ENCODE measurements at regions of chr1 and their contacts with region 1.

Region 1: DNA sequence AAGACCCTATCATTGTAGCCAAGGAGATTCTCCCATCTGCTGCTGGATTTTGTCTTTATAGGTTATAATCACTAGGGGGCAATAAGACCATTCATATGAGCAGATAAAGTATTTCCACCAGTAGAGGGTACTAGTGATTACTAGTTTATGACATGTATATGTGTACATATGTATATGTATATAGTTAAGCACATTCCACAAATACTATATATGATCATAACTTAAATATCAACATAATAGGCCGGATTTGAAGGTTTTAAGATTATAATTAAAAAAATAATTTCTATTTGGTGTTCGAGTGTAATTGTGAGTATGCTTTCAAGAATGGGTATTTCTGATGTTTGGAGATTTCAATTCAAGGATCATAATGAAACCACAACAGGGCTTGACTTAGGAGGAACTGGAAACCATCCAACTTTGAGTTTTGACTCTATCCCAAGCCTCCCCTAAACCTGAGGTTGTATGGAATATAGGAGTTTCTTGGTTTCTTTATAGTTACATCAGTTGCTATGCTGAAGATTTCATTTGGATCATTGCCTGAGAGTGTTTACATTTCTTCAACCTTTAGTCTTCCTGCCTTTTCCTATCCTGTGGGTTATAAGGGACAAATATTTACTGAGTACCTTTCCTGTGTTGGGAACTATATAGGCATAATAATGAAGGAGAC is 16.9 kb downstream of the TCEANC2 start:
- DNase-seq: peak; percentile 75
- ATAC-seq: peak; percentile 92
- H3K4me3 ChIP-seq: no peak overlapping the region
- H3K27ac ChIP-seq: no peak overlapping the region
- H3K4me1 ChIP-seq: 0 out of 2 replicates have a peak, but pooled peaks cover 4% of the 10 kb centered on the region
- H3K27me3 ChIP-seq: no peaks in the 10 kb centered on the region
- CTCF ChIP-seq: peak; percentile 98

Region 2: DNA sequence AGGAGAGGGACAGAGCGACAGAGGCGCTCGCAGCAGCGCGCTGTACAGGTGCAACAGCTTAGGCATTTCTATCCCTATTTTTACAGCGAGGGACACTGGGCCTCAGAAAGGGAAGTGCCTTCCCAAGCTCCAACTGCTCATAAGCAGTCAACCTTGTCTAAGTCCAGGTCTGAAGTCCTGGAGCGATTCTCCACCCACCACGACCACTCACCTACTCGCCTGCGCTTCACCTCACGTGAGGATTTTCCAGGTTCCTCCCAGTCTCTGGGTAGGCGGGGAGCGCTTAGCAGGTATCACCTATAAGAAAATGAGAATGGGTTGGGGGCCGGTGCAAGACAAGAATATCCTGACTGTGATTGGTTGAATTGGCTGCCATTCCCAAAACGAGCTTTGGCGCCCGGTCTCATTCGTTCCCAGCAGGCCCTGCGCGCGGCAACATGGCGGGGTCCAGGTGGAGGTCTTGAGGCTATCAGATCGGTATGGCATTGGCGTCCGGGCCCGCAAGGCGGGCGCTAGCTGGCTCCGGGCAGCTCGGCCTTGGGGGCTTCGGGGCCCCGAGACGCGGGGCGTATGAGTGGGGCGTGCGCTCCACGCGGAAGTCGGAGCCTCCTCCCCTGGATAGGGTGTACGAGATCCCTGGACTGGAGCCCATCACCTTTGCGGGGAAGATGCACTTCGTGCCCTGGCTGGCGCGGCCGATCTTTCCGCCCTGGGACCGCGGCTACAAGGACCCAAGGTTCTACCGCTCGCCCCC is 129.6 kb after region 1 on chr1 and contains the starts of genes CYB5RL and MRPL37:
- CTCF ChIA-PET with region 1: no interaction called
- POLR2A ChIA-PET with region 1: no interaction called
- intact Hi-C with region 1: loop called (anchors 1 kb)
- DNase-seq: peak; percentile 97
- ATAC-seq: peak; percentile 97
- H3K4me3 ChIP-seq: peak within 1 kb of the TSS; percentile 97
- H3K27ac ChIP-seq: peak within 1 kb of the TSS; percentile 3; the same call in 1 of the 2 replicates
- H3K4me1 ChIP-seq: peaks cover 24% of the 10 kb centered on the region
- H3K27me3 ChIP-seq: no peaks in the 10 kb centered on the region
- CTCF ChIP-seq: no peak
- total RNA-seq, gene CYB5RL: 3.6 and 11.9 TPM in 2 replicates
- total RNA-seq, gene MRPL37: 191 and 211 TPM in 2 replicates